Pancreas (tissue), 10 donors: ENCODE measurements at regions of chr5 and their contacts with region 1.

Region 1: GRCh38 chr5:146971401-146971800 is 92.8 kb upstream of the PPP2R2B start:
- DNase-seq: no peak
- ATAC-seq: no peak
- H3K4me3 ChIP-seq: no peak overlapping the region
- H3K27ac ChIP-seq: no peak overlapping the region
- H3K4me1 ChIP-seq: no peaks in the 10 kb centered on the region
- H3K27me3 ChIP-seq: no peaks in the 10 kb centered on the region
- CTCF ChIP-seq: no peak

Region 2: GRCh38 chr5:146553435-146553834 is 418.0 kb before region 1 on chr5:
- intact Hi-C with region 1: loop called in 2 of 3 experiments (anchors 10 kb)
- DNase-seq: no peak
- ATAC-seq: no peak
- H3K4me3 ChIP-seq: no peak overlapping the region
- H3K27ac ChIP-seq: no peak overlapping the region
- H3K4me1 ChIP-seq: no peaks in the 10 kb centered on the region
- H3K27me3 ChIP-seq: no peaks in the 10 kb centered on the region
- CTCF ChIP-seq: no peak